Activated T-helper 1 cell treated with anti-CD3 and anti-CD28 coated beads, Interleukin-12 subunit alpha, Interleukin-12 subunit beta, Interleukin-2, Interleukin-4 antibody, amounts not matched to agents 30 ng/mL and 10 ng/mL and 1 ng/mL, durations not matched to agents 14 hours and 24 hours and 36 hours (primary cell): ENCODE measurements at regions of chr3 and their contacts with region 1.

Region 1: GRCh38 chr3:71398157-71398836 is 185.2 kb downstream of the FOXP1 start:
- DNase-seq: no peak
- H3K4me3 Mint-ChIP-seq: no peak overlapping the region
- H3K27ac Mint-ChIP-seq: no peak overlapping the region
- H3K4me1 Mint-ChIP-seq: peaks cover 17% of the 10 kb centered on the region
- H3K27me3 Mint-ChIP-seq: peaks cover 43% of the 10 kb centered on the region

Region 2: GRCh38 chr3:71444028-71444860 is 45.9 kb after region 1 on chr3:
- intact Hi-C with region 1: loop called (anchors 2 kb)
- DNase-seq: peak; percentile 71
- H3K4me3 Mint-ChIP-seq: peak overlapping the region; percentile 74
- H3K27ac Mint-ChIP-seq: peak overlapping the region; percentile 95
- H3K4me1 Mint-ChIP-seq: peaks cover 73% of the 10 kb centered on the region
- H3K27me3 Mint-ChIP-seq: peaks cover 8% of the 10 kb centered on the region

Region 3: GRCh38 chr3:71461749-71462465 is 63.6 kb after region 1 on chr3:
- intact Hi-C with region 1: loop called (anchors 2 kb)
- DNase-seq: no peak
- H3K4me3 Mint-ChIP-seq: no peak overlapping the region
- H3K27ac Mint-ChIP-seq: no peak overlapping the region
- H3K4me1 Mint-ChIP-seq: peaks cover 15% of the 10 kb centered on the region
- H3K27me3 Mint-ChIP-seq: peaks cover 18% of the 10 kb centered on the region